ENCODE measurements at regions of chr1 and their contacts with region 1.

Region 1: GRCh38 chr1:209266590-209267172 is 316.8 kb upstream of the CAMK1G start:
- DNase-seq: no peak
- ATAC-seq: no peak
- H3K4me3 ChIP-seq: no peak overlapping the region
- H3K27ac ChIP-seq: peak overlapping the region in 1 of 12 donors; percentile 36
- H3K4me1 ChIP-seq: no peaks in the 10 kb centered on the region
- H3K27me3 ChIP-seq: peaks cover 0 to 7% (median 0%) of the 10 kb centered on the region in 9 donors
- CTCF ChIP-seq: no peak
- POLR2A ChIP-seq: no peak

Region 2: DNA sequence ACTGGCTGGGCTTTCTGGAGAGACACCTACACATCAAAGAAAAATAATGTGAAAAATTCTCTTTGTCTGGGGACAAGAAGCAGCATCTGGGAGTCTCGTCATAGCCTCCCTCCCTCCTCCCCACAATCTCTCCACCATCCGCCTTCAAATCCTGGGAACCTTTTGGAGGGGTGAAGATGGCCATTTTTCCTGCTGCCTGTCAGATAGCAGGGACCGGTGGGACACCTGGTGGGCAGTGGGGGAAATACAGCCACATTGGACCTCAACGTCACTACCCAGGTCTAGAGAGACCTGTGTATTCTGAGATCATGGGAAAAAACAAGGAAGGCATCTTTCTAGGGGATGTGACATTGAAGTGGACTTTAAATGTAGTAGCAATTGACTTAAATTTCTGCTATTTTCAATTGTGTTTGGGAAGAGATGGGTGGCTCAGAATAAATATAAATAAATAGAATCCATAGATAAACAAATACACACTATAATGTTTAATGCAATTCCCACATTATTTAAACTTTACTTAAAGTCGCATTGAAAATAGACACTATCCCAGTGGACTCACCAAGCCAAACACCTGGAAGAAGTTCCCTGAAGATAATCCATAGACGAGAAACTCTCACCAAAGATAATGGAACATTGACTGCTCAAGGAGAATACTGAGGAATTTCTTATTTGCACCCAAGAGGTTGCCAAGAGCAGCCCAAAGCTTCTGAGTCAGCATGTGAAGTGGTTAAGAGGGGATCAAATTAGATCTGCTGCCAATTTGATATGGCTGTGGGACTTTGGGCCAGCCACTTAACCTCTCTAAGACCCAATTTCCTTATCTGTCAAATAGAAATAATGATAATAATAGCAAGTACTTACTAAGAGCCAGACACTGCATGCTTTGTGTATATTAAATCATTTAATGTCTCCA is 169.2 kb after region 1 on chr1:
- intact Hi-C with region 1: loop called in 1 of 10 experiments (anchors 10 kb)
- DNase-seq: peak; percentile 46 to 74 (median 53)
- ATAC-seq: peak in 3 of 4 donors; percentile 58 to 71 (median 65)
- H3K4me3 ChIP-seq: no peak overlapping the region
- H3K27ac ChIP-seq: no peak overlapping the region
- H3K4me1 ChIP-seq: no peaks in the 10 kb centered on the region
- H3K27me3 ChIP-seq: peaks cover 0 to 3% (median 0%) of the 10 kb centered on the region in 9 donors
- CTCF ChIP-seq: peak; percentile 49 to 77 (median 68)
- POLR2A ChIP-seq: no peak